OCI-LY7 (cell line): ENCODE measurements at regions of chr16 and their contacts with region 1.

Region 1: DNA sequence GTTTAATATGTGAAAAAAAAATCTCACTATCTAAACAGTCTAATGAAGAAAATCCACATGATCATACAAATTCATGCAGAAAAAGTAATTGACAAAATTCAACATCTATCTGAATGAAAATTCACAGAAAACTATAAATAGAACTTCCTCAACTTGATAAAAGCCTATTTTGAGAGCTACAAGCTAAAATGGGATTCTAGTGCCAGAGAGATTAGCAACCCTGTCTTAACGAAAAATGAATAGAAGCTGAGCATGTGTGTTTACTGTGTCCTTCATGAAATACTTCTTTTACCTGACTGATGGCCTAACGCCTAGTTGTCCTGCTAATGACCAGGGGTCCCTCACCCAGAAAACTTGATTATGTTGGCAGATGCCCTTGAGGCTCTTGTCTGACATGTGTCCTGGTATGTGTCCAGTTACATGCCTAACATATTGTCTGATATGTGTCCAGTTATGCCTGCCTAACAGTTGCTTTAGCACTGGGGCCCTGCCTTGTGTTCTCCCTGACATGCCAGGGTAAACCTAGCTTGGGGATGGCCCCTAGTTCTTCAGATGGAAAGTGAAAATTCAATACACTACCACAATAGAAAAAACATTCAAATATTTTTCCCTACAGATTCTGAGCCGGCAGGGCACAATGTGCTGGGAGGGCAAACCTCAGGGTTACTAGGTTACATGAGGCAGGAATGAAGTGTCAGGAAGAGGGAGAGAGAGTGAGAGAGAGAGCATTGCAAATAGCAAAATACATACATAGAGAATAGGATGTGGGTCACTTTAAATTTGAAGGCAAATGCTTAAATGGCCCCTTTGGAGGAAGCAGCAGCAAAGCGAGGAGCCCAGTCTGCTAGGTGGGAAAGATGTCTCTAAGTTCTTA is 834.0 kb downstream of the CDH11 start:
- DNase-seq: no peak
- H3K4me3 ChIP-seq: no peak overlapping the region
- H3K27ac ChIP-seq: peak overlapping the region; percentile 1
- H3K4me1 ChIP-seq: peaks cover 8% of the 10 kb centered on the region
- CTCF ChIP-seq: no peak

Region 2: GRCh38 chr16:64051824-64052223 is 236.1 kb before region 1 on chr16:
- CTCF ChIA-PET with region 1: no interaction called
- POLR2A ChIA-PET with region 1: no interaction called
- intact Hi-C with region 1: no loop called
- DNase-seq: peak; percentile 31
- H3K4me3 ChIP-seq: no peak overlapping the region
- H3K27ac ChIP-seq: no peak overlapping the region
- H3K4me1 ChIP-seq: no peaks in the 10 kb centered on the region
- CTCF ChIP-seq: peak; percentile 80

Region 3: DNA sequence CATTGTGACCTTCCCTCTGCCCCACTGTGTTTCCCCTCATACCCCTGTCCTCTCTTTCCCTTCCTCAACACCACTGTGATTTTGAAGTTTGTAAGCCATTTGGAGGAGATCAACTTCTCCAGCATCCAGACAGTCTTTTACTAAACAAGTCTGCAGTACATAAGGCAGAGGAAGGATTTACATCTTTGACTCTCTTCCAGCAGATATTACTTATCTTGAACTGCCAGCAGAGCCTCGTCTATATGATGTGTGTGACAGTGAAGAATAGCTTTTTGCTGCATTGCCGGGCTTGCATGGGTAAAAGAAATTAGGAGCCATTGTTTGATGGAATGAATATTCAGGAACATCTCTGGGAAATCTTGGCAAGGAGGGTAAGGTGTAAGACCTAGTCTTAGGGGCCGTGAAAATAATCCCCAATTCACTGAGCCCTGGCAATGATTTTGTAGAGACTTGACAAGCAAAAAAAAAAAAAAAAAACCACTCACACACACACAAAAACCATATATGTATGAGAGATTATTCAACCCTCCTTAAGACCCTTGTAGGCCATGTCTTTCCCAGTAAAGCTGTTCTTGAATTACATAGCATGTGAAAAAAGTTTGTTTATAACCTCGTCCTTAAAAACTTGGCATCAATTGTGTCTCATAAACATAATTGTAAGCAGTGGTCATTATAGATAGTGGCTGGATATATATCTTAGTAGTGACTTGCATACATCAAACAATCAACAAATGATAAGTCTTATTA is 69.9 kb before region 1 on chr16:
- CTCF ChIA-PET with region 1: no interaction called
- POLR2A ChIA-PET with region 1: no interaction called
- intact Hi-C with region 1: no loop called
- DNase-seq: no peak
- H3K4me3 ChIP-seq: no peak overlapping the region
- H3K27ac ChIP-seq: no peak overlapping the region
- H3K4me1 ChIP-seq: no peaks in the 10 kb centered on the region
- CTCF ChIP-seq: no peak

Region 4: DNA sequence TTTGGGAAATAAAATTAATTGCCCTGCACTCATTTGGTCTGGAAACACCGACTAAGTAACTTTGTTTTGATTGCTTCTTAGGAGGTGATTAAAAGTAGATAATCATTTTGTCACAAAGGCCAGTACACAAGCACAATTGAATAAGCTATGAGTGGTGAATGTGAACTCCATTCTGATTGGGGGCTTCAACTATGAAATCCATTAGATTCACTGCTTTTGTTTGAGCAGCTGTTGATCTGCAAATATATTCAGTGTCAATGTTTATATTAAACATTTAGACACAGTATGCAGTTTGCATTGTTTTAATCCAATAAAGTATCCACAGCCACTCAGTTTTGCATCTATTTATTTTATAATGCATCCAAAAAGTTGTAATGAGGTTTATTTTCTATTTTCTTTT is 16.5 kb after region 1 on chr16:
- CTCF ChIA-PET with region 1: no interaction called
- POLR2A ChIA-PET with region 1: interaction called, 53 read pairs
- intact Hi-C with region 1: no loop called
- DNase-seq: no peak
- H3K4me3 ChIP-seq: no peak overlapping the region
- H3K27ac ChIP-seq: no peak overlapping the region
- H3K4me1 ChIP-seq: peaks cover 41% of the 10 kb centered on the region
- CTCF ChIP-seq: no peak

Region 5: GRCh38 chr16:64311241-64311640 is 23.3 kb after region 1 on chr16:
- CTCF ChIA-PET with region 1: no interaction called
- POLR2A ChIA-PET with region 1: interaction called, 10 read pairs
- intact Hi-C with region 1: no loop called
- DNase-seq: no peak
- H3K4me3 ChIP-seq: no peak overlapping the region
- H3K27ac ChIP-seq: no peak overlapping the region
- H3K4me1 ChIP-seq: peaks cover 71% of the 10 kb centered on the region
- CTCF ChIP-seq: no peak

Region 6: GRCh38 chr16:64321881-64322280 is 34.0 kb after region 1 on chr16:
- CTCF ChIA-PET with region 1: no interaction called
- POLR2A ChIA-PET with region 1: no interaction called
- intact Hi-C with region 1: no loop called
- DNase-seq: peak; percentile 96
- H3K4me3 ChIP-seq: peak overlapping the region; percentile 29
- H3K27ac ChIP-seq: peak overlapping the region; percentile 100
- H3K4me1 ChIP-seq: peaks cover 80% of the 10 kb centered on the region
- CTCF ChIP-seq: no peak